ENCODE measurements at regions of chr2 and their contacts with region 1.

Region 1: DNA sequence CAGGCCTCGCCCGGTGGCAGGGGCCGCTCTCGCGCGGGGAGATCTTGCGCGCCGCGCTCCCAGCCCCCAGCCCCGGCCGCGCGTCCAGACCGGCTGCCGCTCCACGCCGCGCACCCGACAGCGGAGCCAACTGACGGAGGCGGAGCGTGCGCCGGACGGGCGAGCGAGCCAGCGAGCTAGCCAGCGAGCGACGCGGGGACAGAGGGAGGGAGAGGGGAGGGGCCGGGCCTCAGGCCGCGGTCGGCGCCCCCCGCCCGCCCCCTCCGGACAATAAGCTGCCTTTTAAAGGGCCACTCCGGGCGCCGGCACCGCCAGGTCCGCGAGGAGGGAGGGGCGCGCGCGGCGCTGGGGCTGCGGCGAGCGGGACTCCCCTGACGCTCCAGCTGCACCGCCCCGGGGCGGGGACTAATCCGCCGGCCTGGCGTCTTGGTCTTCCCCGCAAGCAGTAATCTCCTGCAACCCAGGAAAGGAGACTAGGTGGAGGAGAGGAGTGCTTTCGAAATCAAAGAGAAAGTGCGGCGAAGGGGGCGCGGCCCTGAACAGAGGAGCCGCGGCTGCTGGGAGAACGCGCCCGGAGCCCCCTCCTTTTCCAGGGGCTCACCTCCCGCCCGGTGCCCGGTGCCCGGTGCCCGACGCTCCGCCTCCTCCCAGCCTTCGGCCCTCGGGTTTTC is at the start of gene BIN1:
- DNase-seq: peak; percentile 87 to 94
- H3K4me3 ChIP-seq: peak within 1 kb of the TSS; percentile 96
- H3K27ac ChIP-seq: peak within 1 kb of the TSS; percentile 31
- H3K4me1 ChIP-seq: peaks cover 50% of the 10 kb centered on the region
- H3K27me3 ChIP-seq: no peaks in the 10 kb centered on the region
- CTCF ChIP-seq: no peak
- total RNA-seq, gene BIN1: 87.5 and 95.6 TPM in 2 replicates

Region 2: DNA sequence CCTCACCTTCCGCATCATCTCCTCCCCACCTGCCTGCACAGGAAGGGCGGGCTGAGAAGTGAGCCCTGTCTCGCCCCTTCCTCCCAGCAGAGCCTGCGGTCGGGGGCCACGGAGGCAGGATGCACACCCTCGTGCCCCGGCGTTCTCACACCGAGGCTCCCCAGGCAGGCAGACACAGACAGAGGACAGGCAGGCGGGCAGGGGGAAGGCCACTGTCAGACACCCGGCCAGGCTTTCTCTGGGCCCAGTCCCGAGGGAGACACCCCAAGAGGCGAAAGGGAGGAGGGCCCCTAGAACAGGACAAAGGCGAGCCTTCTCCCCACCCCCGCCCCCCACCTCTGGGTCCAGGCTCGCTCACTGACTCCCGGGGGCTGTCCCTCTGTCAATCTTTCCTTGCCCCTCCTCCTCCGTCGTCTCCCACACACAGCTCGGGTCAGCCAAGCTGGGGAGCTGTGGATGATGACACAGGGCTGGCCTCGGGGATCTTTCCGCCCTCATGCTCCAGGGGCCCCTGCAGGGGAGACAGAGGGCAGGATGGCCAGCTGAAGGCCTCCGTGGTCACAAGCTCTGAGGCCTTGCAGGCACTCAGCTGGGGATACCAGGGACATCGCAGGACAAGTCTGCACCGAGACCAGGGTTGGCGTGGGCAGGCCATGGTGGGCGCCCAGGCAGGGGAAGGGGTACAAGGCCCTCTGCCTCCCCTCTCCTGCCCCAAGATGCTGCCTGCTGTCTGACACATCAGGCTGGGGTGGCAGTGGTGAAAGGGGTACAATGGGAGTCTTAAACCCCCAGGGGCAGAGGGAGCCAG is 25.1 kb before region 1 on chr2:
- CTCF ChIA-PET with region 1: interaction called, 7 read pairs
- POLR2A ChIA-PET with region 1: no interaction called
- intact Hi-C with region 1: loop called (anchors 1 kb)
- DNase-seq: no peak
- H3K4me3 ChIP-seq: no peak overlapping the region
- H3K27ac ChIP-seq: no peak overlapping the region
- H3K4me1 ChIP-seq: peaks cover 35% of the 10 kb centered on the region
- H3K27me3 ChIP-seq: no peaks in the 10 kb centered on the region
- CTCF ChIP-seq: no peak

Region 3: GRCh38 chr2:127122361-127123027 is 15.4 kb after region 1 on chr2:
- CTCF ChIA-PET with region 1: interaction called, 16 read pairs
- POLR2A ChIA-PET with region 1: no interaction called
- intact Hi-C with region 1: no loop called
- DNase-seq: no peak
- H3K4me3 ChIP-seq: no peak overlapping the region
- H3K27ac ChIP-seq: no peak overlapping the region
- H3K4me1 ChIP-seq: no peaks in the 10 kb centered on the region
- H3K27me3 ChIP-seq: no peaks in the 10 kb centered on the region
- CTCF ChIP-seq: no peak

Region 4: DNA sequence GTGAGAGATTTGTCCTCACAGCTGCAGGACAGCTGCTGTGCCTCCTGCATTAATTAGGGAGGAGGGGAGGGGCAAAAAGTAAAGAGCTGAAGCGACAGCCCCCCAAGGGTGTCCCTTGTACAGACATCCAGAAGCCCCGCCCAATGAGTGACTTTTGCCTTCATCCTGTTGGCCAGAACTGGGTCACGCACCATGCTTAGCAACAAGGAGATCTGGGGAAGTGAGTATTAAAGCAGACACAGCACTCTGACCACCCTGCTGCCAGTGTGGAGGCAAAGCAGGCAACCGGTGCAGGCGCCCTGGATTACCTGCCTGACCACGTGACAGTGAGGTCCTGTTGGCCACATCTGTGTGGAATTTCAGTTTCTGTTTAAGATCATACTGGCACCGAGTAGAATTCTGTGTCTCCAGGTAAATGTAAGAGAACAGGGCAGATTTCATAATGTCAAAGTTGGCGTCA is 21.4 kb after region 1 on chr2:
- CTCF ChIA-PET with region 1: no interaction called
- POLR2A ChIA-PET with region 1: interaction called, 3 read pairs
- intact Hi-C with region 1: loop called (anchors 1 kb)
- DNase-seq: peak in 1 of 2 experiments; percentile 86
- H3K4me3 ChIP-seq: no peak overlapping the region
- H3K27ac ChIP-seq: no peak overlapping the region
- H3K4me1 ChIP-seq: 0 out of 2 replicates have a peak, but pooled peaks cover 5% of the 10 kb centered on the region
- H3K27me3 ChIP-seq: no peaks in the 10 kb centered on the region
- CTCF ChIP-seq: no peak

Region 5: DNA sequence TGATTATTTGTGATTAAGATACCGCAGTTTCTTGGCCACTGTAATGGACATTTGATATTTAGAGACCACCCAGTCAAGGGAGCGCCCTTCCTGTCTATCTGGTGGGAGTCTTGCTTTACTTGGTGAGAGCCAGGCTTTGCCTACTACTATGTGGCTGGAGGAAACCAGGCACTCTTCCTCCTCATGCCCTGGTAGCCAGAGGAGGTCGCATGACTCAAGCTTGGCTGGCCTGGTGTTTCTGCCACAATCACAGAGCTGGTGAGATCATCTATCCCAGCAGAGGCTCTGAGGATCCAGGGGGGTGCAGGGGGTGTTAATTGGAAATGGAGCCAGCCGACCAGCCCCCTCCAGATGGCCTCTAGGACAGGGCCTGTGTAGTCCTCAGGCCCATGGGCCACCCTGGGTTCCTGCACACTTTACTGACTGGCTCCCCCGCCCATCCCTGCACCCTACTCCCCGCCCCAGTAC is 46.6 kb after region 1 on chr2:
- CTCF ChIA-PET with region 1: interaction called, 5 read pairs
- POLR2A ChIA-PET with region 1: interaction called, 3 read pairs
- intact Hi-C with region 1: loop called (anchors 2 kb)
- DNase-seq: peak; percentile 80 to 95
- H3K4me3 ChIP-seq: no peak overlapping the region
- H3K27ac ChIP-seq: peak overlapping the region; percentile 80
- H3K4me1 ChIP-seq: peaks cover 61% of the 10 kb centered on the region
- H3K27me3 ChIP-seq: no peaks in the 10 kb centered on the region
- CTCF ChIP-seq: no peak; the same call in 1 of the 2 replicates

Measured in PC-9 (cell line).